GM18951 (cell line): ENCODE measurements at regions of chr5 and their contacts with region 1.

Region 1: GRCh38 chr5:149357370-149358293 is at the start of gene PCYOX1L:
- POLR2A ChIP-seq: peak; percentile 93

Region 2: DNA sequence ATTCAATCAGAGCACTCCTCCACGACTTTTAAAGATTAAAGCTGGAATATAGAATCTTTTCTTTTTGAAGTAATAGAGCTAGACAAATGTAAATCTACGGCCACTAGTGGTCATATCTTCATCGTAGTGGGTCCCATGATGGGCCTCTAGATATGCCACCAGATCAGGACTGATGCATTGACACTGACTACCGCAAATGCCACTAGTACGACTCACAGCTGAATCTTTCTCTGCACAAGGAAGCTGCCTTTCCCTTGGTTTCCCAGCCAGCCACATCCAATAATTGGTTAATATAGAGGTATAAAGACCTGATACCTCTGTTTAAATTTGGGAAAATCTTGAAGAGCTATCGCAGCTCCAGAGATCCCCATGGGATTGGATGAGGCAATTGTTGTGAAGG is 569.0 kb before region 1 on chr5:
- in situ Hi-C with region 1: no loop called
- POLR2A ChIP-seq: no peak

Region 3: GRCh38 chr5:149551200-149552037 is 193.8 kb after region 1 on chr5 and contains the start of gene CSNK1A1:
- in situ Hi-C with region 1: loop called (anchors 25 kb)
- POLR2A ChIP-seq: peak; percentile 97